CD8-positive, alpha-beta memory T cell (primary cell): ENCODE measurements at regions of chr17 and their contacts with region 1.

Region 1: GRCh38 chr17:879549-880442 is 97.6 kb downstream of the MRM3 start:
- DNase-seq: peak; percentile 49 to 78 (median 51)
- H3K4me3 ChIP-seq: no peak overlapping the region
- H3K4me3 Mint-ChIP-seq: no peak overlapping the region
- H3K27ac ChIP-seq: no peak overlapping the region
- H3K27ac Mint-ChIP-seq: peak overlapping the region in 1 of 8 donors; percentile 77
- H3K4me1 ChIP-seq: no peaks in the 10 kb centered on the region
- H3K4me1 Mint-ChIP-seq: peaks cover 7 to 10% (median 9%) of the 10 kb centered on the region in 3 donors
- H3K27me3 ChIP-seq: no peaks in the 10 kb centered on the region
- H3K27me3 Mint-ChIP-seq: peaks cover 34 to 35% of the 10 kb centered on the region in 2 donors

Region 2: GRCh38 chr17:996554-997344 is 117.0 kb after region 1 on chr17 and contains the start of gene TIMM22:
- CTCF ChIA-PET with region 1: interaction called, 10 read pairs
- POLR2A ChIA-PET with region 1: no interaction called
- DNase-seq: peak; percentile 87 to 95 (median 94)
- H3K4me3 ChIP-seq: peak within 1 kb of the TSS; percentile 96
- H3K4me3 Mint-ChIP-seq: peak within 1 kb of the TSS; percentile 94 to 99 (median 99)
- H3K27ac ChIP-seq: peak within 1 kb of the TSS; percentile 62
- H3K27ac Mint-ChIP-seq: peak within 1 kb of the TSS; percentile 96 to 99 (median 97)
- H3K4me1 ChIP-seq: peaks cover 11% of the 10 kb centered on the region
- H3K4me1 Mint-ChIP-seq: peaks cover 21 to 29% (median 29%) of the 10 kb centered on the region in 3 donors
- H3K27me3 ChIP-seq: no peaks in the 10 kb centered on the region
- H3K27me3 Mint-ChIP-seq: no peaks in the 10 kb centered on the region
- total RNA-seq, gene TIMM22: 19.9 to 21.5 TPM

Region 3: DNA sequence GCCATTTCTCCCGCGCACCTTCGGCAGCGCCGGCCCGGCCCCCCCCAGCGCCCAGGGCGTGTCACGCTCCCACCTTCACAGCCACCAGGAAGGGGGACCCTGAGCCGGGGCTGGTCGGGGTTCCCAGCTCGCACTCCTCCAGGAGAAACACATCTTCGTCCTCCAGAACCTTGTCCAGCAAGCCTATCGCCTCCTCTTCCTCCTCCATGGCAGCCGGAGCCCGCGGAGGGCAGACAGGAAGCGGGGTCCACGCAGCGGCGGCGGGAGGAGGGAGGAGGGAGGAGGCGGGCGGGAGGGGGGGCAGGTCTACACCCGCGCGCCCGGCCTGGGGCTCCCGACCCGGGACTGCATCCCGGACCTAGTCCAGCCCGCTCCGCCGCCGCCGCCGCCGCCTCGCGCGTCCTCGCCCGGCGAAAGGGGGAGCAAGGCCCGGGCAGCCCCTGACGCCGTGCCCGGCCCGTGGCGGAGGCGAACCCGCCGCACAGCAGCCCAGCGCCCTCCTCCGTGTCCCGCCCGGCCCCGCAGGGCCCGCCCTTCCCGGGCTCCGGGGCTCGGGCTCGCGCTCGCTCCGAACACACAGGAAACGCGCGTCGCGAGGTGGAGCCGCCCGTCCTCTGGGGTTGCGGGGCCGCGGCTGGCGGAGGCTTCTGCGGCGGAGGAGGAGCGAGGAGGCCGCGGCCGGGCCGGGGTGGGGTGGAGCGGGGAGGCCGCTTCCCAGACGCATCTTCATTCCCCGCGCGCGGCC is 229.2 kb after region 1 on chr17:
- CTCF ChIA-PET with region 1: no interaction called
- POLR2A ChIA-PET with region 1: no interaction called
- DNase-seq: peak; percentile 59 to 81 (median 75)
- H3K4me3 ChIP-seq: peak overlapping the region; percentile 49
- H3K4me3 Mint-ChIP-seq: peak overlapping the region; percentile 81 to 95 (median 87)
- H3K27ac ChIP-seq: peak overlapping the region; percentile 64
- H3K27ac Mint-ChIP-seq: peak overlapping the region; percentile 77 to 99 (median 89)
- H3K4me1 ChIP-seq: peaks cover 24% of the 10 kb centered on the region
- H3K4me1 Mint-ChIP-seq: peaks cover 26 to 56% (median 41%) of the 10 kb centered on the region in 3 donors
- H3K27me3 ChIP-seq: no peaks in the 10 kb centered on the region
- H3K27me3 Mint-ChIP-seq: no peaks in the 10 kb centered on the region

Region 4: DNA sequence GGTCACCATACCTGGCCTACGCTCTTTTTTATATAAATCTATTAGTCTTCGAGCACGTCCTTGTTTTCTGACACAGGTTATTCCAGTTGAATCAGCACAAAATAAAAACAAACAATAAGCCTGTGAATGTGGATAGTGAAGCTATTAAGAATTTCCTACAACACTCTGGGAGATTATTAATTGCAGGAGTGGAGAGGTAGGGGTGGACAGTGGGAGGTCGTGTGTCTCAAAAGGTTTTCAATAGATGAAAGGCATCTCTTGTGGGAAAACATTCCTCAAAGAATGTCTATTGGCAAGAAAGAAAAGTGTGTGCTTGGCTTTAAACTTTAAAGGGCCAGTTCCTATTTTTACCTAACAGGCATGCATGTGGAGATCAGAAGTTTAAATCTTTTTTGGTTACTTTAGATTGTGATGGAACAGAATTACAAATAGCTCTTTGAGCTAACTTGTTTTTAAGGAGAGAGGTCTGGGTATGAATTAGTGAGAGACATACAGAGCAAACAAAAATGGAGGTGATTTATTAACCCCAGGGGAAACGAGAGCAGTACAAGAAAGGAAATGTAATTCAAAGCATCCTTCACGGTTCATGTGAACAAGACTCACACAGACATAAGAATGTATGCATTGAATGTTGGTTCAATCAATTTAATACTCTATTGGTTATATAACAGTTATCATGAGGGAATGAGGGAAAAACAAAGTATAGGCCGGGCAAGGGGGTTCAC is 940.9 kb after region 1 on chr17:
- CTCF ChIA-PET with region 1: no interaction called
- POLR2A ChIA-PET with region 1: interaction called, 10 read pairs
- DNase-seq: no peak
- H3K4me3 ChIP-seq: no peak overlapping the region
- H3K4me3 Mint-ChIP-seq: no peak overlapping the region
- H3K27ac ChIP-seq: no peak overlapping the region
- H3K27ac Mint-ChIP-seq: peak overlapping the region in 1 of 8 donors; percentile 62
- H3K4me1 ChIP-seq: peaks cover 13% of the 10 kb centered on the region
- H3K4me1 Mint-ChIP-seq: peaks cover 12 to 33% (median 30%) of the 10 kb centered on the region in 3 donors
- H3K27me3 ChIP-seq: no peaks in the 10 kb centered on the region
- H3K27me3 Mint-ChIP-seq: no peaks in the 10 kb centered on the region